ENCODE measurements at regions of chr5 and their contacts with region 1.

Region 1: DNA sequence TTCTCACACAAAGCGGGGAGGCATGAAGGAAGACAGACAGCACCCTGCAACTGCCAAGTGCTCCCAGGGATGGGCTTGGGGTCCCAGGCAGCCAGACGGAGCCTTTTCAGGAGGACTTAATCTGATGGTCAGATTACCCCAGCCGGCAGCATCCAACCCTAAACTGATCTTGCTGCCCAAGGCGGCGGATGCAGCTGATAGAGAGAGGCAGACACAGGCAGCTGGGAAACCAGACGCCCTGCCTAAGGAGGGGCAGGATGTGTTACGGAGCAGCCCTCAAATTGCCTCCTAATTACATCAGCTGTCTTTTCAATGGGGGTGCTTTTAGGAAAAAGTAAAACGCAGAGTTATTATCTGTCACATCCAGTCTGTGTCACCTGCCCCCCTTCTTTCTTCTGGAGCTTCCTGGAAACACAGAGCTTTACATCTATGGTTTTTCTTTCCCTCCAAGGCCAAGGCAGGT is 190.9 kb upstream of the PANK3 start:
- DNase-seq: no peak
- ATAC-seq: no peak
- H3K4me3 ChIP-seq: no peak overlapping the region
- H3K27ac ChIP-seq: no peak overlapping the region
- H3K4me1 ChIP-seq: no peaks in the 10 kb centered on the region
- H3K27me3 ChIP-seq: no peaks in the 10 kb centered on the region
- CTCF ChIP-seq: no peak

Region 2: GRCh38 chr5:168844016-168844921 is 74.2 kb after region 1 on chr5:
- CTCF ChIA-PET with region 1: no interaction called
- POLR2A ChIA-PET with region 1: interaction called, 14 read pairs
- in situ Hi-C with region 1: no loop called
- intact Hi-C with region 1: no loop called
- DNase-seq: no peak
- ATAC-seq: no peak
- H3K4me3 ChIP-seq: no peak overlapping the region; a peak in 1 of 4 replicates
- H3K27ac ChIP-seq: no peak overlapping the region
- H3K4me1 ChIP-seq: no peaks in the 10 kb centered on the region
- H3K27me3 ChIP-seq: peaks cover 4% of the 10 kb centered on the region
- CTCF ChIP-seq: no peak

Region 3: DNA sequence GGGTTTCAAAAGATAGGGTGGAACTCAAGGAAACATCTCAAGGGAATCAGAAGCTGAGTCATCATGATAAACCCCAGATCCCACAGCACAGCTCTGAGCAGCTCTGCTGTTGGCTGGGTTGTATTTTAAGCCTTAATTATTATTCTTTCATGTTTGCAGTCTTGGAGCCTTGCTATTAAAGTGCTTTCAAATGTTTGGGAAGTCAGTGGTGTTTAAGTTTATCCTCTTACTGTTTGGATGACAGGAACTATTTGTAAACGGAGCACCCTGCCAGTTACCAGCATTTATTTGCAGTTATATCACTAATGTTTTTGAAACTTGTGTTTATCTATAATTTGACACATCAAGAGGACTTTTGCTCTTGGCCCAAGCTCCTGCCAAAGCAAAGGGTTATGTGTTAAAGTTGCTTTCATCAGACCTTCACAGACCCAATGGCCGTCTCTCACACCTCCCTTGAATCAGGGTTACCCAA is 672.4 kb after region 1 on chr5:
- CTCF ChIA-PET with region 1: no interaction called
- POLR2A ChIA-PET with region 1: no interaction called
- in situ Hi-C with region 1: no loop called
- intact Hi-C with region 1: loop called (anchors 5 kb)
- DNase-seq: no peak
- ATAC-seq: no peak
- H3K4me3 ChIP-seq: no peak overlapping the region
- H3K27ac ChIP-seq: no peak overlapping the region; the same call in 1 of the 2 replicates
- H3K4me1 ChIP-seq: no peaks in the 10 kb centered on the region
- H3K27me3 ChIP-seq: no peaks in the 10 kb centered on the region
- CTCF ChIP-seq: no peak

Measured in Panc1 (cell line).